ENCODE measurements at regions of chr6 and their contacts with region 1.

Region 1: DNA sequence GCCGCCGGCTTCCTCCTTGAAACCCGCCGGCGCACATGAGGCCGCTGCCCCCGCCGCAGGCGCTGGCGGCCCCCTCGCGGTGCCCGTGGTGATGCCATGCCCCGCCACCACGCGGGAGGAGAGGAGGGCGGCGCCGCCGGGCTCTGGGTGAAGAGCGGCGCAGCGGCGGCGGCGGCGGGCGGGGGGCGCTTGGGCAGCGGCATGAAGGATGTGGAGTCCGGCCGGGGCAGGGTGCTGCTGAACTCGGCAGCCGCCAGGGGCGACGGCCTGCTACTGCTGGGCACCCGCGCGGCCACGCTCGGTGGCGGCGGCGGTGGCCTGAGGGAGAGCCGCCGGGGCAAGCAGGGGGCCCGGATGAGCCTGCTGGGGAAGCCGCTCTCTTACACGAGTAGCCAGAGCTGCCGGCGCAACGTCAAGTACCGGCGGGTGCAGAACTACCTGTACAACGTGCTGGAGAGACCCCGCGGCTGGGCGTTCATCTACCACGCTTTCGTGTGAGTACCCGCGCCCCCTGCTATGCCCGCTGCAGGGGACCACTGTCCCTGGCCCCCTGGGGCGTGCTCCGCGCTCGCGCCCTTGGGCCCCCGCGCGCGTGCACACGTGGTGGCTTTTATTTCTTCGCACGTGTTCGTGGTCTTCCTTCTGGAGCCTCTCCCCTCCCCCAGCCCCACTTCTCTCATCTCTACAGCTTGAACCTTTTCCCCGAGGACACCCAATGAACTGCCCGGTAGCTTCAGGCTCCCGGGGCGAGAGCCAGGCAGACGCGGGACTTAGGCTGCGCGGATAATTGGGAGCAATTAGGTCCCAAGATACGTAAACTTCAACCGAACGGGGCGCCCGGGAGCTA is 453 bp downstream of the KCNQ5 start:
- DNase-seq: peak; percentile 65
- H3K4me3 Mint-ChIP-seq: peak overlapping the region; percentile 87
- H3K27ac Mint-ChIP-seq: peak overlapping the region; percentile 87
- H3K4me1 Mint-ChIP-seq: peaks cover 61% of the 10 kb centered on the region
- H3K27me3 Mint-ChIP-seq: peaks cover 2% of the 10 kb centered on the region

Region 2: DNA sequence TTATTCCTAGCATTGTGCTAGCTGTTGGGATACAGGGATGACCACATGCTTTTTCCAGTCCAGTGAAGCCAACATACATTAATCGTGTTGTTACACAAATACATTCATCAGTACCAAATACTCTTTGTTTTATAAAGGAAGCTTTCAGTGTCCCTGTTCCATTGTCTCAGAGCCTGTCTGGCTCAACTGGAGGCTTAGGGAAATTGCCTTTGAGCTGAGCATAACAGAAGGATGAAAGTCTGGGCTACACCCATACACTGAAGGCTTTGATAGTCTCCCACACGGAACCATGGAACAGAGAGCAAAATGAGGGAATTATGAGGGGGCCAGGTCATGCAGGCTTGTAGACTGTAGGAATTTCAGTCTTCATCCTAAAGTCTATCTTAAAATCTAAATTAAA is 126.9 kb before region 1 on chr6:
- CTCF ChIA-PET with region 1: no interaction called
- POLR2A ChIA-PET with region 1: no interaction called
- intact Hi-C with region 1: no loop called
- DNase-seq: no peak
- H3K4me3 Mint-ChIP-seq: no peak overlapping the region
- H3K27ac Mint-ChIP-seq: no peak overlapping the region
- H3K4me1 Mint-ChIP-seq: no peaks in the 10 kb centered on the region
- H3K27me3 Mint-ChIP-seq: peaks cover 10% of the 10 kb centered on the region

Region 3: DNA sequence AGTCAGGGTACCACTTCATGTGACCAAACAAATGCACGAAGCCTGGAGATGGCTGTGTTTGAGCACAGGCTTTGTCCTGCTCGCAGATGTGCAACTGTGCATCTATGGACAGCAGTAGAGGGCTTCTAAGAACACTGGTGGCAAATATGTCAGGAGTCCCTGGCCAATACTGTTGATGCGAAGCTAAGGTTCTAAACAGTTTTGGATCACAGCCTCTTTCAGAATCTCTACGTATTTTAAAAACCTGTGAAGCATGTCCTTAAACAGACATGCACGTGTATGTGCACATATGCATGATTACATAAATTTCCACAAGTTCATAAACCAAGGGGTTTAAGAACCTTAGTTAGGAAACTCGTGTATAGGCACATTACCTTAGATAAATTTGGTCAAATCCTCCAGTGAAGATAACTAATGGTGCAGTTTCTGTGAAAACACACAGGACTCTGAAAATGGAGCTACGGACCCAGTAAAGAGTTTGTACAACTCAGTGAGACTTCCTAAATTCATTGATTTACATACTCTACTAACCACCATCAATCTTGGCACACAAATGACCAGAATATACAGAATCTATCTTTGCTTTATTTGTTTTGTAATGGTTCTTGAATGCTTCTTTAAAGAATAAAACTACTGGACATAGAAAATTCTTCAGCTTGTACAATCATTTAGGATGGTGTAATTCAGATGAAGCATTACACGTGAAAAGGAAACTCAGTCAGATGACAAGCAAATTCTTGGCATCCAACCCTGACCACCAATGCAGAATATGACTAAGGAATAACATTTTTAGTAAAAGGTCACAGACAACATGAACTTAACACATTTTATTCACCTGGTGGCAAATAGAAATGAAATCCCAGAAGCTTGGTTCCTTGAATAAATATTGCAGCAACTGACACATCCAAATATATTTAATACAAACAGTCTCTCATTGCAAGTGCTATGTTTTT is 27.0 kb after region 1 on chr6:
- CTCF ChIA-PET with region 1: interaction called, 17 read pairs
- POLR2A ChIA-PET with region 1: interaction called, 27 read pairs
- intact Hi-C with region 1: loop called (anchors 1 kb)
- DNase-seq: peak; percentile 31
- H3K4me3 Mint-ChIP-seq: no peak overlapping the region
- H3K27ac Mint-ChIP-seq: peak overlapping the region; percentile 47
- H3K4me1 Mint-ChIP-seq: peaks cover 34% of the 10 kb centered on the region
- H3K27me3 Mint-ChIP-seq: no peaks in the 10 kb centered on the region

Region 4: GRCh38 chr6:73129653-73130443 is 507.5 kb after region 1 on chr6:
- CTCF ChIA-PET with region 1: interaction called, 231 read pairs
- POLR2A ChIA-PET with region 1: no interaction called
- intact Hi-C with region 1: loop called (anchors 1 kb)
- DNase-seq: peak; percentile 87
- H3K4me3 Mint-ChIP-seq: no peak overlapping the region
- H3K27ac Mint-ChIP-seq: no peak overlapping the region
- H3K4me1 Mint-ChIP-seq: no peaks in the 10 kb centered on the region
- H3K27me3 Mint-ChIP-seq: peaks cover 1% of the 10 kb centered on the region

Region 5: DNA sequence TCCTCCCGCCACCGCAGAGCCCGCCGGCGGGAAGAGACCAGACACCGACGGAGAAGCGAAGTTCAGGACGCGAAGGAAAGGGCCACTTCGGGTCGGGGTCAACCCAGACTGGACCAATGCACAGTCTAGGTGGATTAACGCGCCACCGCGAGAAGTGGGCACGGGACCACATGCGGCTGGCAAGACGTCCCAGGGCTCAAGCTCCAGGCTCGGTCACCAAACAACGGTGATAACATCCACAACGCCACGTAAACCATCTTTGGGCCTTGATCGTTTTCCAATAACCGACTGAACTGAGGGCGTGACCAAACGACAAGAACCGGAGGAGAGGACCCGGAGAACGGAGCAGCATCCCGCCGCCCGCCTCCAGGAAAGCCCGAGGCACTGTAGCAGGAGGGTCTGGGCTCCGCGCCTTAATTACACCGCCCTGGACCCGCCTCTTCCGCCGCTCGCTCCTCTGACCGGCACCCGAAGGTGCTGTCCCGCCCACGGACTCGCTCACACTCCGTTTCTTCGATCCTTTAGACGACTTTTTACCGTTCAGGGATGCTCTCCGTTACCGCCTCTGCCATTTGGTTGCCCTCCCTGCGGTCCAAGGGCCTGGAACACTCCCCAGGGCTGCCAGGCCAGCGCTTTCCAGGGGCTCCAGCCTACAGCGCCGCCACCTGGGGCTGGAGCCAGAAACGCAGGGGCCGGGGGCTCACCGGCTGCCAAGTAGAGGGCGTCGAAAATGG is 687.6 kb after region 1 on chr6:
- CTCF ChIA-PET with region 1: no interaction called
- POLR2A ChIA-PET with region 1: no interaction called
- intact Hi-C with region 1: loop called (anchors 10 kb)
- DNase-seq: peak; percentile 77
- H3K4me3 Mint-ChIP-seq: peak overlapping the region; percentile 91
- H3K27ac Mint-ChIP-seq: peak overlapping the region; percentile 77
- H3K4me1 Mint-ChIP-seq: peaks cover 19% of the 10 kb centered on the region
- H3K27me3 Mint-ChIP-seq: peaks cover 18% of the 10 kb centered on the region

Region 6: GRCh38 chr6:73520688-73521350 is 898.5 kb after region 1 on chr6 and contains the start of gene EEF1A1:
- CTCF ChIA-PET with region 1: no interaction called
- POLR2A ChIA-PET with region 1: no interaction called
- intact Hi-C with region 1: loop called (anchors 2 kb)
- DNase-seq: peak; percentile 100
- H3K4me3 Mint-ChIP-seq: peak within 1 kb of the TSS; percentile 98
- H3K27ac Mint-ChIP-seq: peak within 1 kb of the TSS; percentile 100
- H3K4me1 Mint-ChIP-seq: peaks cover 39% of the 10 kb centered on the region
- H3K27me3 Mint-ChIP-seq: peaks cover 17% of the 10 kb centered on the region
- total RNA-seq, gene EEF1A1: 16,691 to 17,144 TPM

Measured in activated CD4-positive, alpha-beta memory T cell treated with anti-CD3 and anti-CD28 coated beads for 36 hours (primary cell).